Right ventricle myocardium superior (tissue), 1 donor: ENCODE measurements at regions of chr14 and their contacts with region 1.

Region 1: GRCh38 chr14:100375963-100376735 is 53.0 kb downstream of the SLC25A47 start:
- DNase-seq: peak; percentile 97
- ATAC-seq: peak; percentile 97

Region 2: DNA sequence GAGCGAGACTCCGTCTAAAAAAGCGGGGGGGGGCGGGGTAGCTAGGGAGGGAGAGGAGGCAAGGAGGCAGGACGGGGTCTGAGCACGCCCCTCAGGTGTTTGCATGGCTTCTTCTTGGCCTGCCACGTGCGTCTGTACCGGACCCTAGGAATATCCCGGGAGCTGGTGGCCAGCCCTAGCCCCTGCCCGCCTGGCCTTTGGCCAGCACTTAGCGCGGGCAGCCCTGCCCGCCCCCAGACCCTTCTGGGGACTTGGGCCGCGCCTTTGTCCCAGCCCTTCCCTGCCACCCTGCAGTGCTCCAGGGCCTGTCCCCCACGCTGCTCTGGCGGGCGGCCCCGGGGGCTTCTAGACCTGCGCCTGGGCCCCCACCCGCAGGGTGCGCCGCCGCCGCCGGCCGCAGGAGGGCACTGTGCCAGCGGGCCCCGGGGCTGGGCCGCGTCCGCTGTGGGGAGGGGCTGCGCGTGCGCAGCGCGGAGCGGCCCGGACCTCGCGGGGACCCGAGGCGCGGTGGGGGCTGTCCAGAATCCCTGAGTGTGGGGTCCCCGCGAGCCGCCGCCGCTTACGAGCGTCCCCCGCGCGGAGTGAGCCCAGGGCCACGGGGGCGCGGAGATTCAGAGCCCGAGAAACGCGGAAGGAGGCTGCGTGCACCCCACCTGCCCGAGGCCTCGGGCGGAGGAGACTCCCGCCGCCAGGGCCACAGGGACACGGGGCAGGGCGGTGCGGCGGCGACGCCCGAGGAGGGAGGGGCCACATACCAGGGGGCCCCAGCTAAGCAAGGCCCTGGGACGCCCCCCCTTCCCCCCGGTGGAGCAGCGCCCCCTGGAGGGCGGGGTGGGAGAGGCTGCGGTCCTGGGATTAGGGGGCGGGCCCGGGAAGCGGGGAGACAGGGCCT is 90.9 kb before region 1 on chr14:
- intact Hi-C with region 1: loop called (anchors 10 kb)
- DNase-seq: peak; percentile 84
- ATAC-seq: peak; percentile 94

Region 3: GRCh38 chr14:100592461-100592891 is 216.3 kb after region 1 on chr14:
- intact Hi-C with region 1: no loop called
- DNase-seq: peak; percentile 26
- ATAC-seq: no peak